Right lobe of liver (tissue), 6 donors: ENCODE measurements at regions of chr20 and their contacts with region 1.

Region 1: DNA sequence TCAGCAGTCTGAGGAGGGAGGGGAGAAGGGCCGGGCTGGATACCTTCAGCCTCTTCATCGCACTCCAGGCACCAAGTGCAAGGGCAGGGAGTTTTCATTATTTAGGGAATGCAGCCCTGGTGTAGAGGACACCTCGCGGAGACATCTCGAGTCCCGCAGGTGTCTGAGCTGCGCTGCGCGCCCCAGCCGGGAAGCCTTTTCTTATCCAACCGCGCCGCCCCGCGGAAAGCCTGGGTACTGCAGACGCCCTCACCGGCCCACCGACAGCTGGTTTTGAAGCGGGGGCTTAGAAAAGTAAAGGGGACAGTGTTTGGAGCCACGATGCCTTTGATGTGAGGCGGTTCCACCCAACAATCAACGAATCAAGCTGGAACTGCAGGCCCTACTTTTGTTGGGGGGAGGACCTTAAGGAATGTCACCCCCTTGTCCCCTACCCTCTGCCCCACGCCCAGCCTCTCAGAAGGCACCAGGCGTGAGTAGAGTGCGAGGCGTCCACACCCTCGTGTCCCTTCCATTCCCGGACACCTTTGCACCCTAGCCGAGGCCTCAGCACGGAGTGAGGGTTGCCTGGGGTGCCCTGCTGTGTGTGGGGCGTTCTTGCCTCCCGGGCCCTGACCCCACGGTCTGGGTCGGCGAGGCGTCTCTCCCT is 8.6 kb downstream of the NKX2-2 start:
- DNase-seq: peak; percentile 74 to 83 (median 82)
- ATAC-seq: peak; percentile 82 to 89 (median 88)
- H3K4me3 ChIP-seq: peak overlapping the region in 2 of 3 donors; percentile 26 to 41
- H3K27ac ChIP-seq: no peak overlapping the region
- H3K4me1 ChIP-seq: peaks cover 0 to 15% (median 5%) of the 10 kb centered on the region in 4 donors
- H3K27me3 ChIP-seq: peaks cover 5 to 15% of the 10 kb centered on the region in 2 donors
- CTCF ChIP-seq: peak; percentile 92 to 98 (median 95)
- POLR2A ChIP-seq: no peak

Region 2: GRCh38 chr20:20860078-20860806 is 645.0 kb before region 1 on chr20:
- intact Hi-C with region 1: loop called (anchors 10 kb)
- DNase-seq: peak; percentile 86 to 89 (median 86)
- ATAC-seq: peak; percentile 90 to 97 (median 94)
- H3K4me3 ChIP-seq: no peak overlapping the region
- H3K27ac ChIP-seq: no peak overlapping the region
- H3K4me1 ChIP-seq: no peaks in the 10 kb centered on the region
- H3K27me3 ChIP-seq: no peaks in the 10 kb centered on the region
- CTCF ChIP-seq: peak; percentile 92 to 97 (median 96)
- POLR2A ChIP-seq: no peak

Region 3: DNA sequence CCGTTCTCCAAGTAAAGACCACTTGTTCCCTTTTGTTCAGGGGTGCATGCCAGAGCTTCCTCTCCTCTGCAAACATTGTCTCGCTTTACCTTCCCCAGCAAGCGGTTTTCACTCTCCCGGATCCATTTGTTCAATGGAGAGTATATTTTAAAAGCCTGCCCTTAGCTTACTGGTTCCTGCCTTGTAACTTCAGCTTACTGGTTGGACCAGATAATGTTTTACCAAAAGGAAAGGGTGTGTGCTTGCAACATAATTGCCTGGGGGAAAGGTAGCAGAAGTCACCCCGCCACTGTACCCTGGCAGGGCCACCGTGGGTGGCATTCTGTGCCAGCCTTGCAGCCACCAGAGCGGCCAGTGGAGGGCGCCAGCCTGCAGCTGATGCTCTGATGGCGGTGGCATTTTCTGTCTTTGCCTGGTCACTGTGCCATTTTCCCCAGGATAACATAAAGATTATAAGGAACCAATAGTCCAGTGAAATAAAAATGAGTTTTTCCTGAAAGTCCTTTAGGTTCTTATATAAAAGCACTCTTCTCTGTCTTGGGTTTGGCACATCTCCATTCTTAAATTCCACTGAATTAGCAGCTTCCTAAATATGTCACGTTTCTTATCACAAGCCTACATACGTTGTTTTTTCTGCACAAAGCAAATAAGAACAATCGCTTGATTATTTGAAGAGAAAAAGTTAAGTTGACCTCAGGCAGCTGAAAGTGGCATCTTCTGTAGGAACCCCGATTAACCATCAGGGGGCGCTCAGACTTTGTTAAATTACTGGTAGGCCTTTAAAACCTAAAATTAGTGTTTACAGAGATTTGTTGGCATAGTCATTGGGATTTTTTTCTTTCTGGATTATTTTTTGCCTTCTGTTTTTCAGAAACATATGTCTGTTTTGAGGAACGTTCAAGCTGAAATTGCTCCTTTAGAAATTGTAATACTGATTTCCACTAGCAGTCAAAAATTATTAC is 269.5 kb before region 1 on chr20:
- intact Hi-C with region 1: loop called (anchors 5 kb)
- DNase-seq: peak; percentile 63 to 75 (median 67)
- ATAC-seq: peak; percentile 95 to 98 (median 97)
- H3K4me3 ChIP-seq: no peak overlapping the region
- H3K27ac ChIP-seq: no peak overlapping the region
- H3K4me1 ChIP-seq: peaks cover 0 to 8% (median 0%) of the 10 kb centered on the region in 4 donors
- H3K27me3 ChIP-seq: no peaks in the 10 kb centered on the region
- CTCF ChIP-seq: peak; percentile 72 to 79 (median 75)
- POLR2A ChIP-seq: no peak